Left lung (tissue), 14 donors: ENCODE measurements at regions of chr6 and their contacts with region 1.

Region 1: GRCh38 chr6:32432050-32432450 is 7.6 kb upstream of the HLA-DRA start:
- DNase-seq: peak in 1 of 4 donors; percentile 28
- ATAC-seq: peak; percentile 74
- H3K4me3 ChIP-seq: no peak overlapping the region
- H3K27ac ChIP-seq: no peak overlapping the region
- H3K4me1 ChIP-seq: peaks cover 0 to 5% of the 10 kb centered on the region in 2 donors
- H3K27me3 ChIP-seq: no peaks in the 10 kb centered on the region
- CTCF ChIP-seq: peak in 1 of 2 donors; percentile 23

Region 2: GRCh38 chr6:32519118-32519909 is 87.3 kb after region 1 on chr6:
- intact Hi-C with region 1: no loop called
- DNase-seq: no peak
- ATAC-seq: no peak
- H3K4me3 ChIP-seq: no peak overlapping the region
- H3K27ac ChIP-seq: no peak overlapping the region
- H3K4me1 ChIP-seq: no peaks in the 10 kb centered on the region
- H3K27me3 ChIP-seq: no peaks in the 10 kb centered on the region
- CTCF ChIP-seq: no peak

Region 3: DNA sequence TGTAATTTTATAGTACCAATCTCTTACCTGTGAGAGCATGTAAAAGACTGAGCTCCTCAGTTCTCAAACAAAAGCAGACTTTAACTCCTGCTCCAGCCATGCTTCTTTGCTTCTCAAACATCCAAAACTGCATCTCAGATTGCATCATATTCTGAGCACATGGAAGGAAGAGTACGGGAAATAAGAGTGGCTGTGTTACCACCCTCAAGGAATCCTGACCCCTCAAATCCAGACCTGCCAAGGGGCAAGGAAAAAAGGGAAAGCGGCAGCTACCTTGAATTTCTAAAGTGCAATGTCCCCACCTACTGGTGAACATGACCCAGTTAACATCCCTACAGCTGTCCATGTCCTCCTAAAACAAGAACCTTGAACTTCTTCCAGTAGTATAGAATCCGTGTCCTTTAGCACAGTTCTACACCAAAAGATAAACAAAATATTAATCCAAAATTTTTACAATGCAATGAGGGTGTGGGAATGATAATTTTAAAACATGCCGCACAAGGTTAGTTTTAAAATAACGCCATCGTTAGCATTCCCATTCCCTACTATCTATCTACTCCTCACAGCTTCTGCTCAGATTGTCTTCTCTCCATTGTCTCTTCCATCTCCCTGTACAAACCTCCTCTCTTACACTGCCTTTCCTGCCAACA is 268.5 kb after region 1 on chr6:
- intact Hi-C with region 1: loop called in 1 of 2 experiments (anchors 5 kb)
- DNase-seq: peak in 2 of 4 donors; percentile 42 to 71
- ATAC-seq: peak; percentile 97
- H3K4me3 ChIP-seq: no peak overlapping the region
- H3K27ac ChIP-seq: no peak overlapping the region
- H3K4me1 ChIP-seq: peaks cover 0 to 6% of the 10 kb centered on the region in 2 donors
- H3K27me3 ChIP-seq: no peaks in the 10 kb centered on the region
- CTCF ChIP-seq: peak; percentile 53 to 68